CD8-positive, alpha-beta memory T cell (primary cell): ENCODE measurements at regions of chr2 and their contacts with region 1.

Region 1: GRCh38 chr2:168160897-168161296 is 86.5 kb downstream of the STK39 start:
- DNase-seq: no peak
- H3K4me3 ChIP-seq: no peak overlapping the region
- H3K4me3 Mint-ChIP-seq: no peak overlapping the region
- H3K27ac ChIP-seq: no peak overlapping the region
- H3K27ac Mint-ChIP-seq: no peak overlapping the region
- H3K4me1 ChIP-seq: no peaks in the 10 kb centered on the region
- H3K4me1 Mint-ChIP-seq: peaks cover 21 to 41% (median 26%) of the 10 kb centered on the region in 3 donors
- H3K27me3 ChIP-seq: no peaks in the 10 kb centered on the region
- H3K27me3 Mint-ChIP-seq: no peaks in the 10 kb centered on the region

Region 2: DNA sequence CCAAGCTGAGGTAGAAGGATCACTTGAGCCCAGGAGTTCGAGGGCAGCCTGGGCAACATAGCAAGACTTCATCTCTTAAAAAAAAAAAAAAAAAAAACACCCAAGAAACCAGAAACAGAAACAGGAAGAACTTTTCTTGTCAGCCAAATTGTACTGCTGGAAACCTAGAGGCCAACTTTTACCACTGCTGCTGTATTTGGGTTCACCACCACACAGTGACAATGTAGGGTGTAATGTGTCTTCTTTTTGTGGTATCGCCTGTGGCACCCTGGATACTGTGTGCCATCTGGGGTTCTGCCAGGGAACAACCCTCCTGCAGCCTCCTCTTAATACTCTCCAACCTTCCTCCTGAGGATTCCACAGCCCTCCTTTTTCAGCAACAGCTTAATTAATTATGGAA is 13.9 kb after region 1 on chr2:
- CTCF ChIA-PET with region 1: no interaction called
- POLR2A ChIA-PET with region 1: no interaction called
- DNase-seq: peak in 2 of 5 donors; percentile 38 to 58
- H3K4me3 ChIP-seq: no peak overlapping the region
- H3K4me3 Mint-ChIP-seq: peak overlapping the region; percentile 69 to 80 (median 76)
- H3K27ac ChIP-seq: no peak overlapping the region
- H3K27ac Mint-ChIP-seq: peak overlapping the region; percentile 52 to 94 (median 78)
- H3K4me1 ChIP-seq: peaks cover 23% of the 10 kb centered on the region
- H3K4me1 Mint-ChIP-seq: peaks cover 64 to 80% (median 72%) of the 10 kb centered on the region in 3 donors
- H3K27me3 ChIP-seq: no peaks in the 10 kb centered on the region
- H3K27me3 Mint-ChIP-seq: no peaks in the 10 kb centered on the region

Region 3: GRCh38 chr2:168192839-168193616 is 32.1 kb after region 1 on chr2:
- CTCF ChIA-PET with region 1: no interaction called
- POLR2A ChIA-PET with region 1: no interaction called
- DNase-seq: peak; percentile 4 to 67 (median 65)
- H3K4me3 ChIP-seq: peak overlapping the region; percentile 35
- H3K4me3 Mint-ChIP-seq: peak overlapping the region; percentile 25 to 81 (median 70)
- H3K27ac ChIP-seq: no peak overlapping the region
- H3K27ac Mint-ChIP-seq: peak overlapping the region; percentile 48 to 97 (median 76)
- H3K4me1 ChIP-seq: peaks cover 43% of the 10 kb centered on the region
- H3K4me1 Mint-ChIP-seq: peaks cover 76 to 94% (median 93%) of the 10 kb centered on the region in 3 donors
- H3K27me3 ChIP-seq: no peaks in the 10 kb centered on the region
- H3K27me3 Mint-ChIP-seq: no peaks in the 10 kb centered on the region

Region 4: GRCh38 chr2:168336864-168337263 is 176.0 kb after region 1 on chr2:
- CTCF ChIA-PET with region 1: interaction called, 12 read pairs
- POLR2A ChIA-PET with region 1: no interaction called
- DNase-seq: peak; percentile 16 to 69 (median 33)
- H3K4me3 ChIP-seq: no peak overlapping the region
- H3K4me3 Mint-ChIP-seq: no peak overlapping the region
- H3K27ac ChIP-seq: no peak overlapping the region
- H3K27ac Mint-ChIP-seq: peak overlapping the region in 2 of 8 donors; percentile 26 to 52
- H3K4me1 ChIP-seq: no peaks in the 10 kb centered on the region
- H3K4me1 Mint-ChIP-seq: peaks cover 5 to 7% (median 6%) of the 10 kb centered on the region in 3 donors
- H3K27me3 ChIP-seq: no peaks in the 10 kb centered on the region
- H3K27me3 Mint-ChIP-seq: peaks cover 0 to 6% of the 10 kb centered on the region in 2 donors

Region 5: GRCh38 chr2:168773719-168774521 is 613.0 kb after region 1 on chr2:
- CTCF ChIA-PET with region 1: no interaction called
- POLR2A ChIA-PET with region 1: no interaction called
- DNase-seq: no peak
- H3K4me3 ChIP-seq: no peak overlapping the region
- H3K4me3 Mint-ChIP-seq: no peak overlapping the region
- H3K27ac ChIP-seq: peak overlapping the region; percentile 40
- H3K27ac Mint-ChIP-seq: no peak overlapping the region
- H3K4me1 ChIP-seq: no peaks in the 10 kb centered on the region
- H3K4me1 Mint-ChIP-seq: no peaks in the 10 kb centered on the region
- H3K27me3 ChIP-seq: no peaks in the 10 kb centered on the region
- H3K27me3 Mint-ChIP-seq: no peaks in the 10 kb centered on the region